ENCODE measurements at regions of chr1 and their contacts with region 1.

Region 1: GRCh38 chr1:216346526-216346925 is 76.7 kb downstream of the USH2A start:
- DNase-seq: no peak
- H3K4me3 ChIP-seq: no peak overlapping the region
- H3K4me3 Mint-ChIP-seq: no peak overlapping the region
- H3K27ac Mint-ChIP-seq: no peak overlapping the region
- H3K4me1 ChIP-seq: peaks cover 45% of the 10 kb centered on the region
- H3K4me1 Mint-ChIP-seq: peaks cover 10% of the 10 kb centered on the region
- H3K27me3 ChIP-seq: no peaks in the 10 kb centered on the region
- H3K27me3 Mint-ChIP-seq: no peaks in the 10 kb centered on the region
- CTCF ChIP-seq: no peak

Region 2: DNA sequence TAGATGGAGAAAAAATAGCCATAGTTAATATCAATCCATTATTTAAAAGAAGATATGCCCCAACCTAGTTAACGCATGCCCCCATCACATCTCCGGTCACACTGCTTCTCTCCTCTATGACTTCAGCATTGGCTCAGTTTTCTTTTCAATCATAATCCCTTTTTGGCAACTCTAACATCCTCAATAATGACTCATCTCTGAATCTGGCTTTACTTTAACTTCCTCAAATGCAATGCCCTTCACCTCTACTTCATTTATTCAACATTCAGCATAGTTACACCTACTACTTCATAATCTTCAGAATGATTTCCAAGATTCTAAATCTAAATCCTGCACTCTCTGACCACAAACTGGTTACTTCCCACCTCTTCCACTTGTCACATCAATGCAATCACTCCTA is 340.6 kb before region 1 on chr1:
- CTCF ChIA-PET with region 1: no interaction called
- POLR2A ChIA-PET with region 1: no interaction called
- intact Hi-C with region 1: no loop called
- DNase-seq: no peak
- H3K4me3 ChIP-seq: no peak overlapping the region
- H3K4me3 Mint-ChIP-seq: no peak overlapping the region
- H3K27ac Mint-ChIP-seq: no peak overlapping the region
- H3K4me1 ChIP-seq: no peaks in the 10 kb centered on the region
- H3K4me1 Mint-ChIP-seq: no peaks in the 10 kb centered on the region
- H3K27me3 ChIP-seq: no peaks in the 10 kb centered on the region
- H3K27me3 Mint-ChIP-seq: peaks cover 5% of the 10 kb centered on the region
- CTCF ChIP-seq: no peak

Region 3: DNA sequence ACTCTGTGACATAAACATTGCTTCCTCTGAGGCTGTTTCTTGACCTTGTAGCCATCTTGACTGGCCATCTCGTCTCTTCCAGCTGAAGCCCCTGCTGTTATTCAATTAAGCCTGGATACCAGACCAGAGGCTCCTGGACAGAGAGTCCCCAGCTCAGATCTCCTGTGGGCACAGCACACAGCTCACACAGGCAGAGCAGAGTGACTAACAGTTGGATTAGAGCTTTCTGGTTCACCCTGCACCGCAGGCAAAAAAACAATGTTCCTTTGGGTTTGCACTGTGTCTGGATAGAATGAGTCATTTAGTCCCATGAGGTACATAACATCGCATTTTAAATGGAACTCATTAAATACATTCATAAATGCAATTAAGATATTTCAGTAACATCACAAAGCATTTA is 110.2 kb after region 1 on chr1:
- CTCF ChIA-PET with region 1: no interaction called
- POLR2A ChIA-PET with region 1: no interaction called
- intact Hi-C with region 1: loop called (anchors 5 kb)
- DNase-seq: no peak
- H3K4me3 ChIP-seq: no peak overlapping the region
- H3K4me3 Mint-ChIP-seq: no peak overlapping the region
- H3K27ac Mint-ChIP-seq: no peak overlapping the region
- H3K4me1 ChIP-seq: peaks cover 65% of the 10 kb centered on the region
- H3K4me1 Mint-ChIP-seq: peaks cover 37% of the 10 kb centered on the region
- H3K27me3 ChIP-seq: no peaks in the 10 kb centered on the region
- H3K27me3 Mint-ChIP-seq: no peaks in the 10 kb centered on the region
- CTCF ChIP-seq: no peak

Region 4: DNA sequence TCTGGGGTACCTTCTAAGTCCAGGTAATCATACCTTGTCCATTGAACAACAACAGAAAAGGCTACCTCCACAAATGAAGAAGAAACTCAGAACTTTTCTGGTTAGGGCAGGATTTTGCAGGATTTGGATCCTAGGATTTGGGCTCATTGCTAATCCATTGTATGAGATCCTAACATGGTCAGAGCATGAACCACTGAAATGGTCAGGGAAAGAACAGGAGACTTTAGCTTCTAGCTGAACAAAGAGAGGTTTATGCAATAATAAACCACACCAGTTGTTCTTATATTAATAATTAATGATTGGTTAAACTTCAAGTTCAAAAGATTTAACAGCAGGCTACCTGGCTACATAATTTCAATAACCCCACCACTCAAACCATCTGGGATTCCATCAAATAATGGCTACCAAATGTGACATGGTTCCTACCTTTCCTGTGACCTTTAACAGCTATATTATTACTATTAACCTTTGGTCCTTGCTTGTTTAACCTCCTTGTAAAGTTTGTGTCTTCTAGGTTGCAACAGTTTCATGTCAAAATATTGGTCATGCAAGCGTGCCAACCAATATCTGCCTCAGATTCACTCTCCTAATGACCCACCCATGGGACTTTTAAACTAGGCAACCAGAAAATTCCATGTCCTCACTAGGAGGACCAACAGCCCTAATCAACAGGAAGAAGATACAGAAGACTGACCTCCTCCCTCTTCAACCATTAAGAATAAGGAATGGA is 137.3 kb after region 1 on chr1:
- CTCF ChIA-PET with region 1: no interaction called
- POLR2A ChIA-PET with region 1: no interaction called
- intact Hi-C with region 1: no loop called
- DNase-seq: no peak
- H3K4me3 ChIP-seq: no peak overlapping the region
- H3K4me3 Mint-ChIP-seq: no peak overlapping the region
- H3K27ac Mint-ChIP-seq: no peak overlapping the region
- H3K4me1 ChIP-seq: no peaks in the 10 kb centered on the region
- H3K4me1 Mint-ChIP-seq: no peaks in the 10 kb centered on the region
- H3K27me3 ChIP-seq: no peaks in the 10 kb centered on the region
- H3K27me3 Mint-ChIP-seq: no peaks in the 10 kb centered on the region
- CTCF ChIP-seq: no peak